HepG2 (cell line): ENCODE measurements at regions of chr11 and their contacts with region 1.

Region 1: DNA sequence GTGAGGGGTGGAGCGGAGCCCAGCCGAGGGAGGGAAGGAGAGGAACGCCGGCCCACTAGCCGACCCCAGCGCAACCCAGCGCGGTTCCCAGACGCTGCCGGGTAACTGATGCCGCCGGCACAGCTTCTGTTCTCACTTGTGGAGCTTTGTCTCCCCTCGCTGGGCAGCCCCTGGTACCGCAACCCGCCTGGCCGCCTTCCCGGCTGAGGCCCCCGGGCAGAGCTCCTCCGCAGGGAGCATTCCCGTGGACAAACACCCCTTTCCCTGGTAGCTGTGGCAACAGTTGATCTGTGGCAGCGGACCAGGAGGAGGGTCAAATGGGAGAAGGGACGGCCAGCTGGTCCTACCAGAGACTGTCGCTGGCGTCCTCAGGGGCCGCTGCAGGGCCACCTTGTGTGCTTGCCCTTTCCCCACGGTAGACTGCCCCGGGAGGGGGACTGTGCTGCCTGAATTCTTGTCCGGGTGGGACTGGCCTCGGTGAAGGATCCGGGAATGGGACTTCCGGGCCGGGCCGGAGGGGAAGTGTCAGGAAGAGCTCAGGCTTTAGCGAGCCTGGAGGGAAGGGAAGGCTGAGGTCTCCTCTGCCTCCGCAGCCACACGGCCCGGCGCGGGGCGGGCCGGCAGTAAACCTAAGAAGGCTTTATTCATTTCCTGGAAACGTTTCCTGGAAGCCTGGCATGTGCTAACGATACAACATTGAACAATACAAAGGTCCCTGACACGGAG is 468.0 kb downstream of the OPCML start:
- DNase-seq: peak; percentile 16
- ATAC-seq: peak; percentile 96
- H3K4me3 ChIP-seq: peak overlapping the region in 1 of 3 experiments; percentile 37; a peak in 2 of 6 replicates
- H3K27ac ChIP-seq: no peak overlapping the region
- H3K4me1 ChIP-seq: no peaks in the 10 kb centered on the region
- H3K27me3 ChIP-seq: peaks cover 0 to 18% of the 10 kb centered on the region in 2 experiments; a peak in 3 of 5 replicates
- CTCF ChIP-seq: peak; percentile 84
- EP300 ChIP-seq: no peak
- POLR2A ChIP-seq: no peak
- RAD21 ChIP-seq: peak; percentile 69; the same call in 1 of the 2 replicates

Region 2: GRCh38 chr11:131694526-131695424 is 1369.5 kb before region 1 on chr11:
- CTCF ChIA-PET with region 1: no interaction called
- POLR2A ChIA-PET with region 1: no interaction called
- in situ Hi-C with region 1: loop called (anchors 25 kb)
- intact Hi-C with region 1: no loop called
- DNase-seq: peak; percentile 52
- ATAC-seq: peak; percentile 94
- H3K4me3 ChIP-seq: no peak overlapping the region
- H3K27ac ChIP-seq: no peak overlapping the region
- H3K4me1 ChIP-seq: no peaks in the 10 kb centered on the region
- H3K27me3 ChIP-seq: peaks cover 0 to 25% of the 10 kb centered on the region in 2 experiments; a peak in 1 of 5 replicates
- CTCF ChIP-seq: peak; percentile 89
- EP300 ChIP-seq: no peak
- POLR2A ChIP-seq: no peak
- RAD21 ChIP-seq: peak; percentile 48

Region 3: GRCh38 chr11:132114185-132114584 is 950.1 kb before region 1 on chr11:
- CTCF ChIA-PET with region 1: no interaction called
- POLR2A ChIA-PET with region 1: no interaction called
- in situ Hi-C with region 1: loop called (anchors 25 kb)
- intact Hi-C with region 1: loop called (anchors 5 kb)
- DNase-seq: no peak
- ATAC-seq: peak; percentile 77
- H3K4me3 ChIP-seq: no peak overlapping the region
- H3K27ac ChIP-seq: no peak overlapping the region
- H3K4me1 ChIP-seq: no peaks in the 10 kb centered on the region
- H3K27me3 ChIP-seq: no peaks in the 10 kb centered on the region
- CTCF ChIP-seq: peak; percentile 55
- EP300 ChIP-seq: no peak
- POLR2A ChIP-seq: no peak
- RAD21 ChIP-seq: no peak